ENCODE measurements at regions of chrX and their contacts with region 1.

Region 1: DNA sequence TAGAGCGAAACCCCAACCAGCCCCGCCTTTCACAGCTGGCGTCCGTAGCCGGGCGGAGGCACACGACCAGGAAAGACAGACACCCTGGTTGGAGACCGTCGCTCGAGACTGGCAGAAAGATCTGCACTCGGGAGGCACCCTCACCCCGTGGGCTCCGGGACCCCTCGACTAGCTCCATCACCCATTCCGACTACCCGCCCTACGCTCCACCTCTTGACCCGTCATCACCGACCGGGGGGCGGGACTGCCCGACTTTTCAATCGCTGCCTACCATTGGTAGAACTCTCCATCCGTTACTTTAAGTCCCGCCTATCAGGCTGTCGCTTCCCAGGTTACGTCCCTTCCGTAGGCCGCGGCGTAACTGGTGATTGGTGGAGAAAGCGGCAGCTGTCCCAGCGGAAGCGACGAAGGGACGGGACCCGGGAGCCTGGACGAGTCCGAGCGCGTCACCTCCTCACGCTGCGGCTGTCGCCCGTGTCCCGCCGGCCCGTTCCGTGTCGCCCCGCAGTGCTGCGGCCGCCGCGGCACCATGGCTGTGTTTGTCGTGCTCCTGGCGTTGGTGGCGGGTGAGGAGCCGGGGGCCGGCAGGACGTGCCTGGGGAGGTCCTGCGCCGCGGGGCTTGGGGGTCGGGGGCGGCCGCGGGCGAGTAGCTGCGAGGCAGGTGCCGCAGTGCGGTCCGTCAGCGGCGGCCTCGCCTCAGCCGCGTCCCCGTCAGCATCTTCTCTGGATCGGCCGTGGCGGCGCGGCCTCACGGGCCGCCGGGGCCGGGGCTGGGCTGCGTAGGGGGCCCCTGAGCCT is at the start of gene ATP6AP2:
- DNase-seq: peak; percentile 92
- H3K4me3 Mint-ChIP-seq: peak within 1 kb of the TSS; percentile 82
- H3K27ac Mint-ChIP-seq: peak within 1 kb of the TSS; percentile 88
- H3K4me1 Mint-ChIP-seq: peaks cover 27% of the 10 kb centered on the region
- H3K27me3 Mint-ChIP-seq: no peaks in the 10 kb centered on the region
- total RNA-seq, gene ATP6AP2: 72.9 to 77.8 TPM

Region 2: GRCh38 chrX:40570346-40571093 is 10.2 kb before region 1 on chrX:
- CTCF ChIA-PET with region 1: no interaction called
- POLR2A ChIA-PET with region 1: no interaction called
- DNase-seq: peak; percentile 16
- H3K4me3 Mint-ChIP-seq: peak overlapping the region; percentile 55
- H3K27ac Mint-ChIP-seq: peak overlapping the region; percentile 56
- H3K4me1 Mint-ChIP-seq: peaks cover 12% of the 10 kb centered on the region
- H3K27me3 Mint-ChIP-seq: no peaks in the 10 kb centered on the region

Region 3: GRCh38 chrX:40591126-40591525 is 10.4 kb after region 1 on chrX:
- CTCF ChIA-PET with region 1: no interaction called
- POLR2A ChIA-PET with region 1: interaction called, 10 read pairs
- DNase-seq: no peak
- H3K4me3 Mint-ChIP-seq: no peak overlapping the region
- H3K27ac Mint-ChIP-seq: no peak overlapping the region
- H3K4me1 Mint-ChIP-seq: peaks cover 27% of the 10 kb centered on the region
- H3K27me3 Mint-ChIP-seq: no peaks in the 10 kb centered on the region

Measured in activated CD4-positive, alpha-beta memory T cell treated with anti-CD3 and anti-CD28 coated beads, Interleukin-2, amount 10 ng/mL, durations not matched to agents 7 days and 5 days (primary cell).